Right ventricle myocardium inferior (tissue), 1 donor: ENCODE measurements at regions of chr13 and their contacts with region 1.

Region 1: DNA sequence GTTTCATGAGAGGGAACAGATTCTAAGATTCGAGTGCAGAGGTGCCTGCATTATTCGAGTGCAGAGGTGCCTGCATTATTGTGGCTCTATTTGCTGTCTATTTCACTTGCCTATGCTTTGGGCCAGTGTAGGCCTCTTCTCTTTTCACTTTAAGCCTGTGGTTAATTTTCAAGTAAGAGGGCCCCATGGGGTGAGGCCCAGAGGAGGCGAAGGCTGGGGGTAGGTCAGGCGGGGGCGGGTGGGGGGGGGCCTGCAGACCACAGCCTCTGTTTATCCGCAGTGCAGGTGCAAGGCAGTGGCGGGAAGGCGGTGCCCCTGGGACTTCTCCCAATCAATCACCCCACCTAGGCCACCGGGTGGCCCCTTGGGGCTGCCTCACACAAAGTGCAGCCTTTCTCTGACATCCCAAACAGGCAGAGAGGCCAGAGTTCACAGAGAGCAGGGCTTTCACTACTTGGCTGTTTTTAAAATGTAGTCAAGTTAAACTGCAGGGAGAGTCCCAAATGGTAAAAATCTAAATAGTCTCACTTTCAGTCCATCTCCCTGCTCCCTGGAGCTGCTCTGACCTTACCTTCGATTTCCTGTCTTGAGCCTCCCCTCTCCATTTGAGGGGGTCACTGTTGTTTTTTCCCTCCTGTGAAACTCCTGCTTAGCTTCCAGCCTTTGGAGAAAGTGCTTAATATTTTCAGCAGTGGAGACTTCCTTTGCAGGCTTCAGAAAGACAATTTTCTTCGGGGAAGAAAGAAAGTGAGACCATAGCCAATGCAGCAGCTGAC is 249.0 kb downstream of the DLEU7 start:
- DNase-seq: no peak
- ATAC-seq: no peak

Region 2: GRCh38 chr13:50543782-50544181 is 50.7 kb before region 1 on chr13:
- intact Hi-C with region 1: no loop called
- DNase-seq: no peak
- ATAC-seq: no peak

Region 3: GRCh38 chr13:50685491-50685890 is 91.0 kb after region 1 on chr13:
- intact Hi-C with region 1: loop called (anchors 5 kb)
- DNase-seq: peak; percentile 83
- ATAC-seq: peak; percentile 59

Region 4: DNA sequence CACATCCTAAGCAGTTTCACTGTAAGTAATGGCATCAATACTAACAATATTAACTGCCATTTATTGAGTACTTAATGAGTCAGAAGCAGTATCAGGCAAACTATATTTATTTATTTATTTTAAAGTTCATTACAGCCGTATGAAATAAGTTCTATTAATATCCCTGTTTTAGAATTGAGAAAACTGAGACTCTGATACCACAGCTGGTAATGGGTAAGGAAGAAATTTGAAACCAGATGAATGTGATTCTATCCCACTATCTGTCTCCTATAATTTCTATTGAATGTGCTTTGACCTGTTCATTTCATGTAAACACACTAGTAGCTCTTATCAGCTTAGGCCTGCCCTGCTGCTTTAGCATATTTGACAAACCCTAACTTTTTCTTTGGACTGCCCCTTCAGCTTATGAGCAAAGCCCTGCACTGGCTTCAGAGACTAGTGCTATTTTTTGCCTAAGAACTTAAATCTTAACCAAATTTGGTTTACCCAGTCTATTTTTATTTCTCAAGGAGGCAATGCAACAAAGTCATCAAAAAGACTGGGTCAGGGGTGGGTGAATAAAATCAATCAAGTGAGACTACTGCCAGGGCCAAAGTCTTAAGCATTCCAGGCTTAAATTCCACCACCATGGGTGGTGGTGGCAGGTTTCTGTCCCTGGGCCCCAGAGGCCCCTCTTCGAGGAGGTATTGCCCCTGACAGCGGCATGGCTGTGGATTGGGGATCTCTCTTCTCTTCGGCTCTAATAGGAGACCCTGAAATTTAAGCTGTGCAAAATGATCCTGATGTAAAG is 105.6 kb after region 1 on chr13:
- intact Hi-C with region 1: no loop called
- DNase-seq: no peak
- ATAC-seq: no peak